Heart right ventricle (tissue), 16 donors: ENCODE measurements at regions of chr13 and their contacts with region 1.

Region 1: GRCh38 chr13:95301183-95301967 is at the start of gene ABCC4:
- DNase-seq: peak; percentile 57 to 69
- ATAC-seq: peak; percentile 74 to 94 (median 85)
- H3K4me3 ChIP-seq: peak within 1 kb of the TSS; percentile 42 to 89 (median 75)
- H3K27ac ChIP-seq: peak within 1 kb of the TSS; percentile 57 to 92 (median 76)
- H3K4me1 ChIP-seq: peaks cover 0 to 41% (median 22%) of the 10 kb centered on the region in 9 donors
- H3K27me3 ChIP-seq: peaks cover 0 to 10% (median 0%) of the 10 kb centered on the region in 7 donors
- CTCF ChIP-seq: no peak
- total RNA-seq, gene ABCC4: 2.3 to 6.7 (median 4.1) TPM

Region 2: GRCh38 chr13:94470126-94470525 is 831.2 kb before region 1 on chr13:
- intact Hi-C with region 1: no loop called
- DNase-seq: no peak
- ATAC-seq: no peak
- H3K4me3 ChIP-seq: no peak overlapping the region
- H3K27ac ChIP-seq: no peak overlapping the region
- H3K4me1 ChIP-seq: no peaks in the 10 kb centered on the region
- H3K27me3 ChIP-seq: no peaks in the 10 kb centered on the region
- CTCF ChIP-seq: no peak

Region 3: DNA sequence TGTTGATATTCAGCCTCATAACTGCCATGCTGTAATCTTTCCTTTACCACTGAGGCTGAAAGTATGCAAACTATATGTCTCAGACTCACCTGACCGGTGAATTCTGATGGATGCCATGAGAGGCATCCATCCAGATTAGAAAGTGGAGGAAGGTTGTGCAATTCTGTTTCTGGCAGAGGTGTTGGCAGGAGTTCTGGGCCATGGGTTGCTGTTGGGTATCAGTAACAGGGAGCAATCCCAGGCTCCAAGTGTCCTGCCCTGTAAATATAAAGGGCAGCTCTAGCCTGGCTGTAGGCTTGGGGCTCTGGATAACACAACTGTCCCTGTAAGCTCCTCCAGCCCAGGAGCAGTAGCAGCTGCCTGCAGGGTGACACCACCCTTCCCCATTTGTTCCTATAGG is 77.2 kb after region 1 on chr13:
- intact Hi-C with region 1: loop called in 9 of 10 experiments (anchors 1 to 10 kb)
- DNase-seq: peak; percentile 11 to 48
- ATAC-seq: peak; percentile 46 to 86 (median 72)
- H3K4me3 ChIP-seq: no peak overlapping the region
- H3K27ac ChIP-seq: peak overlapping the region in 3 of 10 donors; percentile 10 to 48 (median 17)
- H3K4me1 ChIP-seq: peaks cover 3 to 19% (median 8%) of the 10 kb centered on the region in 9 donors
- H3K27me3 ChIP-seq: peaks cover 0 to 2% (median 0%) of the 10 kb centered on the region in 7 donors
- CTCF ChIP-seq: no peak

Region 4: GRCh38 chr13:95385808-95386207 is 84.4 kb after region 1 on chr13:
- intact Hi-C with region 1: loop called in 6 of 10 experiments (anchors 2 to 5 kb)
- DNase-seq: no peak
- ATAC-seq: no peak
- H3K4me3 ChIP-seq: no peak overlapping the region
- H3K27ac ChIP-seq: no peak overlapping the region
- H3K4me1 ChIP-seq: peaks cover 0 to 20% (median 10%) of the 10 kb centered on the region in 9 donors
- H3K27me3 ChIP-seq: peaks cover 0 to 12% (median 0%) of the 10 kb centered on the region in 7 donors
- CTCF ChIP-seq: no peak